Spleen (tissue), 13 donors: ENCODE measurements at regions of chr2 and their contacts with region 1.

Region 1: GRCh38 chr2:206159346-206160124 is at the starts of genes EEF1B2 and NDUFS1:
- DNase-seq: peak; percentile 100
- H3K4me3 ChIP-seq: peak within 1 kb of the TSS; percentile 53 to 98 (median 88)
- H3K27ac ChIP-seq: peak within 1 kb of the TSS; percentile 72 to 95 (median 94)
- H3K4me1 ChIP-seq: peaks cover 31 to 88% (median 66%) of the 10 kb centered on the region in 6 donors
- H3K27me3 ChIP-seq: no peaks in the 10 kb centered on the region
- CTCF ChIP-seq: peak in 4 of 11 experiments; percentile 3 to 43 (median 17)
- POLR2A ChIP-seq: peak in 1 of 3 donors; percentile 8
- total RNA-seq, gene EEF1B2: 351 to 658 (median 504) TPM
- total RNA-seq, gene NDUFS1: 62.6 to 93.6 (median 66.5) TPM

Region 2: GRCh38 chr2:206085742-206086445 is 73.6 kb before region 1 on chr2 and contains the start of gene INO80D:
- intact Hi-C with region 1: loop called (anchors 10 kb)
- DNase-seq: peak; percentile 93
- H3K4me3 ChIP-seq: peak within 1 kb of the TSS; percentile 60 to 80 (median 64)
- H3K27ac ChIP-seq: peak within 1 kb of the TSS; percentile 95 to 99 (median 98)
- H3K4me1 ChIP-seq: peaks cover 13 to 71% (median 41%) of the 10 kb centered on the region in 6 donors
- H3K27me3 ChIP-seq: no peaks in the 10 kb centered on the region
- CTCF ChIP-seq: peak in 10 of 11 experiments; percentile 36 to 73 (median 61)
- POLR2A ChIP-seq: peak in 1 of 3 donors; percentile 53
- total RNA-seq, gene INO80D: 23.9 to 39.8 (median 33.2) TPM

Region 3: DNA sequence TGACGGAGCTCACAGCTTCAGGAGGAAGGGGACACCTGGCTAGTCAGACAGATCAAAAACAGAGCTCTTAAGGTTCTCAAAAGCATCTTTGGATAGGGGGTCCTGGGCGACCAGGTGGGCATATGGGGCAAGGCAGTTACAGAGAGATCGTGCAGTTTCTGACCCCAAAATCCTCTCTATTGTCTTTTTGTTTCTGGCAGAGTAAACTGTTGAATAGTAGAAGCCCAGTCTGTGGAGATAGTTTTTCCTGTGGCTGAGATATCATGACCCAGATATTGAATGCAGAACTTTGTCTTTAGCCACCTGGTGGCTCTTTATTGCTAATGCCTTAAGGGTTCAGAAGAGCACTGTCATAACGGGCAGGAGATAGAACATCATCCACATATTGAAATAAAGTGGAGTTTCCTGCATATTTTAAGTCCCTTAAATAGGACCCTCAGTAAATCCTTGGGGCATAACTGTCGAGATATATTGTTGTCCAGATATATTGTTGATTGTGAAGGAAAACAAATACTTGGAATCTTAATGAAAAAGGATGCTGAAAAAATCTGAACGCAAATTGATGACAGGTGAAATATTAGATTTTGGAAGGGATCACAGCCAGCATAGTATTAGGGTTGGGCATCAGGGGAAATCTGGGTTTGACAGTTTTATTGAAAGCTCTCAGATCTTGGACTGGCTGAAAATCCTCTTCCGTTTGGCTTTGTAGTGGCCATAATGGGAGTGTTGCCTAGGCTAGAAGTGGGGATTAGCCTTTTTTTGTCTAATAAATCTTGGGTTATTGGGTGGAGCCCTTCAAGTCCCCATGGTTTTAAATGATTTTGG is 100.9 kb after region 1 on chr2:
- intact Hi-C with region 1: loop called (anchors 10 kb)
- DNase-seq: no peak
- H3K4me3 ChIP-seq: no peak overlapping the region
- H3K27ac ChIP-seq: no peak overlapping the region
- H3K4me1 ChIP-seq: peaks cover 0 to 17% (median 0%) of the 10 kb centered on the region in 6 donors
- H3K27me3 ChIP-seq: peaks cover 4 to 100% (median 95%) of the 10 kb centered on the region in 7 donors
- CTCF ChIP-seq: peak in 7 of 11 experiments; percentile 32 to 59 (median 42)
- POLR2A ChIP-seq: no peak

Region 4: DNA sequence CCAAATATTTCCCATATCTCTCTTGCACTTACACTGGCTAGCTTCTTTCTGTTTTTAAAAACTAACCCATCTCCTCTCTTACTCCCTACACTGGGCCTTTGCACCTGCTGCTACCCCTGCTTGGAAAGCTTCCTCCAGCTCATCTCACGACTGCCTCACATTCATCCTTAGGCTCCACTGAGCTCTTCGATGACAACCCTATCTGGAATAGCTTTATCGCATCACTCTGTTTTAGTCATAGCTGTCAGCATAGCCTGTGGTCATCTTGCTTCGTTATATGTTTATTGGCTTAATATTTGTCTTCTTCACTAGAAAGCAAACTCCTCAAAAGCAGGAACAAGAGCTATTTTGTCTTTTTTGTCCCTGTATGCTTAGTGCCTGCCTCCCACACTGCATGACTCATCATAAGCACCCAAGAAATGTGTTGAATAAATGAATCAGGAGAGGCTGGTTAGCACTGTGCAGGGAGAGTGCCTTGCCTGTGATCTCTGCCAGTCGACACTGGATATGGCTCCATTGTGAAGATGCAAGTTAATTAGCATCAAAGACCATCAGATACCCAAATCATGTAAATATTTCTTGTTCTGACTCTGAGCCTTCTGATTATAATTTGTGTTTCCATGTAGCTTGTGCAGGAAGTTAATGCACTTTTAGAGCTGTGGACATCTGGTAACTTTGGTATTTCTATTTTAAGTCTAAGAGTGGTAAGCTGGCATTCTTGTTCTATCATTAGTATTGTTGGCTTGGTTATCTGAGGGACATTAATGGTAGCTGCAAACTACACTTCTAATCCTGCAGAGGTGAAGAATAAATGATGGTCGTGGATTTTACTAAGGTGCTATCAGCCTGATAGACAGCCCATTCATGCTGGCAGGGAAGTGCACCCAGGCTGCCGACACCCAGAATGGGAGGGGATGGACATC is 569.0 kb after region 1 on chr2:
- intact Hi-C with region 1: no loop called
- DNase-seq: no peak
- H3K4me3 ChIP-seq: no peak overlapping the region
- H3K27ac ChIP-seq: no peak overlapping the region
- H3K4me1 ChIP-seq: no peaks in the 10 kb centered on the region
- H3K27me3 ChIP-seq: peaks cover 0 to 12% (median 0%) of the 10 kb centered on the region in 7 donors
- CTCF ChIP-seq: no peak
- POLR2A ChIP-seq: no peak